ENCODE measurements at regions of chr4 and their contacts with region 1.

Region 1: DNA sequence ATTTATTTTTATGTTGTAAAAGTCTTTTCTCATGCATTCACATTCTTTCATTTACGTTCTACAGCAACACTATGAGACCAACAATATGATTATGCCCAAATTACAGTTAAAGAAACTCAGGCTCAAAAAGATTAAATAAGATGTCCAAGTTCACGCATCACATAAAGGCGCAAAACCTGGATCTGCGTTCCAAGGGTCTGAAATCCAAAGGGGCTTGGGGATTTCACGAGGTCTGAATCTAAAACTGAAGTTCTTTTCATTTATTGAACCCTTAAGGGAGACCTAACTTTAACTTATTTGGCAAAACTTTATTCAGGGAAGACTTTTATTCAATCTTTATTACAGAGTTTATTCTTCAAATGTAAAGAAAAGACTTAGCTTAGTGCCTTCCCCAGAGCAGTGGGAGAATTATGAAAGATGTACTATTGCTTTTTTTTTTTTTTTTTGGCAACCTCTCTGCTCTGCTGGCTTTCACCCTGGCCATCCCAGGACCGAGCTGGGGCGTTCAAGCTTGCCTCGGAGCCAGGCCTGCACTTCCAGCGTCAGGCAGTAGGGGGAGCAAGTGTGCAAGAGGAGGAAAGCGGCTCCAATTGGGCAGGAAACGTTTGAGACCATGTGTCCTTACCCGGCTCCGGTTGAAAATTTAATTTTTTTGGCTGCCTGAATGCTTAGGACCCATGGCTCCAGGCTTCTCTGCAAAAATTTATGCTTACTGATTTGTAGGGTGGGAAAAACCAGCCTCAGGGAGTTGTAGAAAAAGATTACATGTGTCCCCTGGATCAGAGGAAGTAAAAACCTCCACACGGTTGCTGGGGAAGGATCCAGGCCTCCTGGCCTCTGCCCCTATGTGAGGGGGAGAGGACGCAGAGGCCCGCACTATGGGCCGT is 344.3 kb upstream of the KLF3 start:
- DNase-seq: peak; percentile 68 to 98 (median 93)

Region 2: GRCh38 chr4:38128478-38129459 is 190.9 kb before region 1 on chr4:
- intact Hi-C with region 1: no loop called
- DNase-seq: peak in 8 of 42 donors; percentile 8 to 38 (median 28)

Region 3: GRCh38 chr4:38281371-38282071 is 38.2 kb before region 1 on chr4:
- intact Hi-C with region 1: no loop called
- DNase-seq: no peak

Region 4: GRCh38 chr4:38387348-38387747 is 67.6 kb after region 1 on chr4:
- intact Hi-C with region 1: no loop called
- DNase-seq: no peak

Region 5: DNA sequence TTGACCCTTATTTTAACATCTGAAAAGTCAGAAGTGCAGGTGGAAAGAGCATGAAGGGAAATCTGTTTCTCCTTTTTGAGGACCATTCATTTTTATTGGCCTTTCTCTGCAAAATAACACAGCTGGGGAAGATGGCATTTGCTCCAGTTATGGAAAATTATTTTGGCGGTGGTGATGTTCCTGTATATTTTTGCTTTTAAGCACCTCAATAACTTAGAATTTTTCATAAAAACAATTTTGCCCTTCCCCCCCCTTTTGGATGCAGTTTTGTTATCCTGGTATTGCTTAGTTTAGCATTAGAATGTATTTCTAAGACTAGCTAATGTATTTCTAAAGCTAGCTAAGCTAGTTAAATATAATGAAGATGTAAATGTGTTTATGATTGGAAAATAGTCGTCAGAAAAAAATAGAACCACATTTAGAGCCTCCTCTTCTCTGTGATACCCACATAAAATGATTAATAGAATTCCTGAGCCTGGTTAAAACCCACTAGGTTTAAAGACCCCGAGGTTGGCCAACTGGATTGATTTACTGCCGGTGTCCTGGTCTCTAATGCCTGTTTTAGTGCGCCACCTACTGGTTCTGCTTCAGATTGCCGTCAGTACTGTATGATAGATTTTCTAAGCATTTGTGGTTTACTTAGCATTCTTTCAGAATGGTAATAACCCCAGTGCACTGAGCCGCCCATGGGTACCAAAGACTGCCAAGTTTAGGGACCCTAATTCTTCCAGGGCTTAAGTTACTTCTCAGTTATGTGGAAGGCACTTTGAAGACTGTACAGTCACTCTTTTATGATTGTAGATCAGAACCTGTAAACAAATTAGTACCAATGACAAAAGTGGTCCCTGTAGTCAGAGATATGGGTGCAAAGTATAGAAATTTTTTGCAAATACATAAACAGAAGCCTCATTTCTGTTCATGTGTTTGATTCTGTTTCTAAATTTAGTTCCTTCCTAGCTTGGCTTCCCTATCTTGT is 355.7 kb after region 1 on chr4:
- intact Hi-C with region 1: loop called (anchors 5 kb)
- DNase-seq: peak; percentile 37 to 96 (median 85)

Measured in head of caudate nucleus (tissue), 42 donors.